Activated T-helper 1 cell treated with anti-CD3 and anti-CD28 coated beads, Interleukin-12 subunit alpha, Interleukin-12 subunit beta, Interleukin-2, Interleukin-4 antibody, amounts not matched to agents 30 ng/mL and 10 ng/mL and 1 ng/mL, durations not matched to agents 14 hours and 24 hours and 36 hours (primary cell): ENCODE measurements at regions of chr15 and their contacts with region 1.

Region 1: GRCh38 chr15:34367101-34368081 is at the start of gene LPCAT4:
- DNase-seq: peak; percentile 88
- H3K4me3 Mint-ChIP-seq: peak within 1 kb of the TSS; percentile 98
- H3K27ac Mint-ChIP-seq: peak within 1 kb of the TSS; percentile 97
- H3K4me1 Mint-ChIP-seq: peaks cover 39% of the 10 kb centered on the region
- H3K27me3 Mint-ChIP-seq: no peaks in the 10 kb centered on the region
- total RNA-seq, gene LPCAT4: 78.0 and 80.8 TPM in 2 replicates

Region 2: GRCh38 chr15:34065941-34066340 is 301.4 kb before region 1 on chr15:
- intact Hi-C with region 1: loop called (anchors 10 kb)
- DNase-seq: no peak
- H3K4me3 Mint-ChIP-seq: no peak overlapping the region
- H3K27ac Mint-ChIP-seq: no peak overlapping the region
- H3K4me1 Mint-ChIP-seq: no peaks in the 10 kb centered on the region
- H3K27me3 Mint-ChIP-seq: no peaks in the 10 kb centered on the region

Region 3: DNA sequence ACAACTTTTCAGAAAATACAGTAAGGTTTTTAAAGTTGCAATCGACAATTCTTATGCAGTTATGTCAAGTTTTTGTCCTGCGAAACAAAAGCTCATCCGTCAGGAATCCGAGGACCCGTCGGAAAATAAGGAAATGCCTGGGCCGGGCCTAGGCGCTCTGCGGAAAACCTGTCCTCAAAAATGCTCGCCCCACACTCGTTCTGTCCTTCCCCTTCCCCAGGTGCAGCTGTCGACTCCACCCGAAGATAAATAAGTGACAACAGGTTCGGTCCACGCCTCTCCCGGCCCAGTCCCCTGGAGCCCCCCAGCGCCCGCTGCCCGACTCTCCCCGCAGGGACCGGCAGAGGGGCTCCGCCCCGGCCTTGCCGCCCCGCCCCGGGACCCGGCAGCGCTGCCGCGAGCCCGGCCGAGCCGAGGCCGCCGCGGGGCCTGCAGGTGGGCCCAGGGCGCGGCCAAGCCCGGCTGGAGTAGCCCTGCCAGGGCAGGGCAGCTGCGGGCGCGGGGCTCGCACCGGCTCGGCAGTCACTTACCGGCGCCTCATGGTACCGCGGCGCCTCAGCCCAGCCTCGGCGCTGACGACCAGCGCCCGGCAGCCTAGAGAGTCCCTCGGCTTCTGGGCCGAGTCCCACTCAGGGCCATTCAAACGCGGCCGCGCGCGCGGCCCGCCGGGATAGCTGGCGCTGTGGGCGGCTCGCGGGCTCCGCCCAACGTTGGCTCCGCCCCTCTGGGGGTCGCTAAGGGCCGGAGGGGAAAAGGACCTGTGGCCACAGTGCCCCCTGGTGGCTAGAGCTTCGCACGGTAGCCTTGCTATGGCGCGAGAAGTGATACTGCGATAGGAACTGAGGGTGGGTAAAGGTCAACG is 157.7 kb before region 1 on chr15 and contains the start of gene KATNBL1:
- intact Hi-C with region 1: loop called (anchors 1 kb)
- DNase-seq: peak; percentile 92
- H3K4me3 Mint-ChIP-seq: peak within 1 kb of the TSS; percentile 89
- H3K27ac Mint-ChIP-seq: peak within 1 kb of the TSS; percentile 72
- H3K4me1 Mint-ChIP-seq: peaks cover 34% of the 10 kb centered on the region
- H3K27me3 Mint-ChIP-seq: peaks cover 5% of the 10 kb centered on the region
- total RNA-seq, gene KATNBL1: 37.6 and 42.1 TPM in 2 replicates

Region 4: GRCh38 chr15:34241372-34242330 is 125.7 kb before region 1 on chr15:
- intact Hi-C with region 1: loop called (anchors 1 kb)
- DNase-seq: no peak
- H3K4me3 Mint-ChIP-seq: no peak overlapping the region
- H3K27ac Mint-ChIP-seq: no peak overlapping the region
- H3K4me1 Mint-ChIP-seq: peaks cover 38% of the 10 kb centered on the region
- H3K27me3 Mint-ChIP-seq: no peaks in the 10 kb centered on the region

Region 5: GRCh38 chr15:34318277-34319079 is 48.9 kb before region 1 on chr15:
- intact Hi-C with region 1: no loop called
- DNase-seq: no peak
- H3K4me3 Mint-ChIP-seq: peak overlapping the region; percentile 88
- H3K27ac Mint-ChIP-seq: peak overlapping the region; percentile 79
- H3K4me1 Mint-ChIP-seq: peaks cover 43% of the 10 kb centered on the region
- H3K27me3 Mint-ChIP-seq: no peaks in the 10 kb centered on the region

Region 6: DNA sequence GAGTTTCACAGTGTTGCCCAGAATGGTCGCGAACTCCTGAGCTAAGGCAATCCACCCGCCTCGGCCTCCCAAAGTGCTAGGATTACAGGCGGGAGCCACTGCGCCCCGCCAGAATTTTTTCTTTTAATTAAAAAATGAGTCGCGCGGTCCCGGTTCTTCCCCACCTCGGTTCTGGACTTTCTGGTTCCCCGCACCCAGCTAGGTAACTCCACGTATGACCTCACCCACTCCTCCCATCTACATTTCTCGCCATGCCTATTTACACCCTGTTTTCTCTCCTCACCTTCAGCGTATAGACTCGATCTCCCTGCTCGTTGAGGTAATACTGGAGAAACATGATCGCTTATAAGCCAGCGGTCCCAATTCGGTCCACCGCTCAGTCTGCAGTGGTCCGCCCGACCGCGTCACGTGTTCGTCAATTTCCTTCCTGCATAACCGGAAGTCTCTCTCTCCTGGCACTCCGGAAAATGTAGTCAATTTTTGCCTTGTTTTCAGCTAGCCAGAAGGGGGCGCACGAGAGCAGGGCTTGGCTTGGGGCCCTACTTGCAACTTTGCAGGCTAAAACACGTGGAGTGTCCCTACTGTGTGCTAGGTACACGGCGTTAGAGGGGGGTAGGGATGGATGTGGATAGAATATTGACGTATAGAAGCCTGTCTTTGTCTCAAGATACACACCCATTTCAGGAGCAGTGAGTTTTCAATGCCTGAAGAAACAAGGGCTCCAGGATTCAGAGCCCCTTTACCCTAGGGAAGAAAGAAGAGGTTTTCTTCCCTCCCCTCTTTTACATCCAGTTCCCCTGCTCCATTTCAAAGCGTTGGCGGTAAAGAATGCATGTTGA is 24.4 kb before region 1 on chr15 and contains the starts of genes NOP10 and NUTM1:
- intact Hi-C with region 1: loop called (anchors 1 kb)
- DNase-seq: peak; percentile 91
- H3K4me3 Mint-ChIP-seq: no peak within 1 kb of the TSS
- H3K27ac Mint-ChIP-seq: peak within 1 kb of the TSS; percentile 88
- H3K4me1 Mint-ChIP-seq: peaks cover 26% of the 10 kb centered on the region
- H3K27me3 Mint-ChIP-seq: no peaks in the 10 kb centered on the region
- total RNA-seq, gene NOP10: 257 and 267 TPM in 2 replicates
- total RNA-seq, gene NUTM1: not detected in 2 replicates

Region 7: DNA sequence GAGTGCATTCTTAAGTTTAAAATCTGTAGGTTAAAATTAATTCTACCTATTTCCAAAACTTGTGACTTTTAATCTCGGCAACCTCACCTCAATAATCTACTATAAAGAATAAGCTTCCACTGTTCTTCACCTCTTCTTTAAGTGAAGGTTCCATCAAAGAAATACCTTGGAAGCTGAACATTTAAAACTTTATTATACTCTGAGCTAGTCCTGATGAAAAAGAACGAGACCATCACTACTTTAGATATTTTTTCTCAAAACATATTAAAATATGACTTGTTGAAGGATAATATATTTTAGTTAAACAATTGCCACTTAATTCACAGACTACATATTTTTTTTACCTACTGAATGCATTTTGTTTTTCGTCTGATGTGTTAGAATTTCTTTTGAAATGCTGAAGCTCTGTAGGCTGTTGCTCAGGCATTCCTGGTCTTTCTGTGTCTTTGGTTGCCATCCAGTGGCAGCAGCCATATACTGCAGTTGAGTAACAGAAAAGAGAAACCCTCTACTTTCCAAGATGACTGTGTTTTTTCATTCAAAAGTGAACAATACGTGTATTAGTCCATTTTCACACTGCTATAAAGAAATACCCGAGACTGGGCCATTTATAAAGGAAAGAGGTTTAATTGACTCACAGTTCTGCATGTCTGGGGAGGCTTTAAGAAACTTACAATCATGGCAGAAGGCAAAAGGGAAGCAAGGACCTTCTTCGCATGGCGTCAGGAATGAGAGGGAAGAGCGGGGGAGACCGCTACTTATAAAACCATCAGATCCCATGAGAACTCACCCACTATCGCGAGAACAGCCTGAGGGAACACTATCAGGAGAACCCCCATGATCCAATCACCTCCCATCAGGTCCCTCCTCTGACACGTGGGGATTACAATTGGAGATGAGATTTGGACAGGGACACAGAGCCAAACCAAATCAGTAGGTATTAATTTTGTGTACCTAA is 220.6 kb after region 1 on chr15:
- intact Hi-C with region 1: loop called (anchors 1 kb)
- DNase-seq: peak; percentile 48
- H3K4me3 Mint-ChIP-seq: peak overlapping the region; percentile 83
- H3K27ac Mint-ChIP-seq: peak overlapping the region; percentile 52
- H3K4me1 Mint-ChIP-seq: peaks cover 19% of the 10 kb centered on the region
- H3K27me3 Mint-ChIP-seq: peaks cover 30% of the 10 kb centered on the region